Activated CD4-positive, alpha-beta memory T cell treated with anti-CD3 and anti-CD28 coated beads for 36 hours (primary cell): ENCODE measurements at regions of chr11 and their contacts with region 1.

Region 1: GRCh38 chr11:118634431-118635236 is 27.2 kb downstream of the PHLDB1 start:
- DNase-seq: peak; percentile 32
- H3K4me3 Mint-ChIP-seq: no peak overlapping the region
- H3K27ac Mint-ChIP-seq: no peak overlapping the region
- H3K4me1 Mint-ChIP-seq: no peaks in the 10 kb centered on the region
- H3K27me3 Mint-ChIP-seq: no peaks in the 10 kb centered on the region

Region 2: DNA sequence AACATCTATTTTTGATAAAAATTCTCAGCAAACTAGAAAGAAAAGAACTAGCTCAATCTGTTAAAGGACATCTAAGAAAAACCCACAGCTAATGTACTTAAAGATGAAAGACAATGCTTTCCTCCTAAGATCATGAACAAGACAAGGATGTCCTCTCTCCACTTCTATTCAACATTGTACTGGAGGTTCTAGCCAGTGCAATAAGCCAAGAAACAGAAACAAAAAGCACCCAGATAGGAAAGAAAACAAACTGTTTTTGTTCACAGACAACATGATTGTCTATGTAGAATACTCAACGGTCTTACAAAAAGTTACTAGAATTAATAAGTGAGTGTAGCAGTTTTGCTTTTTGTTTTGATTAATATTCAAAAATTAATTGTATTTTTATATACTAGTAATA is 299.9 kb before region 1 on chr11:
- CTCF ChIA-PET with region 1: no interaction called
- POLR2A ChIA-PET with region 1: no interaction called
- intact Hi-C with region 1: no loop called
- DNase-seq: no peak
- H3K4me3 Mint-ChIP-seq: peak overlapping the region; percentile 51
- H3K27ac Mint-ChIP-seq: peak overlapping the region; percentile 78
- H3K4me1 Mint-ChIP-seq: peaks cover 43% of the 10 kb centered on the region
- H3K27me3 Mint-ChIP-seq: no peaks in the 10 kb centered on the region

Region 3: GRCh38 chr11:118659314-118659952 is 24.8 kb after region 1 on chr11:
- CTCF ChIA-PET with region 1: interaction called, 14 read pairs
- POLR2A ChIA-PET with region 1: no interaction called
- intact Hi-C with region 1: no loop called
- DNase-seq: peak; percentile 94
- H3K4me3 Mint-ChIP-seq: no peak overlapping the region
- H3K27ac Mint-ChIP-seq: no peak overlapping the region
- H3K4me1 Mint-ChIP-seq: peaks cover 2% of the 10 kb centered on the region
- H3K27me3 Mint-ChIP-seq: no peaks in the 10 kb centered on the region